Aorta (tissue), 5 donors: ENCODE measurements at regions of chr2 and their contacts with region 1.

Region 1: DNA sequence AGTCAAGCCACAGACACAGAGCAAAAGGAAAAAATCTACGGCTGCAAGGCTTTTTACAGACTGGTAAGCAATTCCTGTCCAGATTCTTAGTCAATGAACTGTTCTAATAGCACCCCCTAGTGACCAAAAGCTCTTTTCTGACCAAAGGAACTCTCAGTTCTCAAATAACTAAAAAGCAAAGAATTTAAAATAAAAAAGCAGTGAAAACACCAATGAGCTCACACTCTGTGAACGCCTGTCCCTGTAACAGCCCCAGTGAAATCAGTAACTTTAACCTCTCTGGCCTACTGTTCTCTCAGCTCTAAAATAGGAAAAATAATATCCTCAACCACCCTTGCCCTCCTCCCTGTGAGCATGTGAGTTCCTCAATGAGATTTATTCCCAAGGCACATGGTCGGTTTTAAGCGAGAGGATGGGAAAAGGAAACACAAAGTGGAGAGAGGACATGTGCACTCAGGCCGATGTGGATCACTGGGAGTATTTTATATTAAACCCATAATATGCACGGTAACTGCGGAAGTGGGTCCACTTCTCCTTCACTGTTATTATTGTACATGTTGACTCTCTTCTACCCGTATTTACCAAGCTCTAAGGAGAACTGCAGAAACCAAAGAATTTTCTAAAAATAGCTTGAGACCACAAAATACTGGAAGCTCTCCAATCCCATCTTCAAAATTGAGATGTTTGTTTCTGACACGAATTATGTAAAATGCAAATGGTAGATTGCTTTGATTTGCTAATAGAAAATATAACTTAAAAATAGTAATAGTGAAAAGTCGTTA is 128.5 kb downstream of the STK39 start:
- DNase-seq: no peak
- ATAC-seq: peak; percentile 82
- H3K4me3 ChIP-seq: no peak overlapping the region
- H3K27ac ChIP-seq: no peak overlapping the region
- H3K4me1 ChIP-seq: peaks cover 0 to 2% of the 10 kb centered on the region in 2 donors
- H3K27me3 ChIP-seq: no peaks in the 10 kb centered on the region

Region 2: GRCh38 chr2:166539340-166540162 is 1579.4 kb before region 1 on chr2:
- intact Hi-C with region 1: loop called in 1 of 2 experiments (anchors 5 kb)
- DNase-seq: no peak
- ATAC-seq: peak; percentile 82
- H3K4me3 ChIP-seq: no peak overlapping the region
- H3K27ac ChIP-seq: no peak overlapping the region
- H3K4me1 ChIP-seq: no peaks in the 10 kb centered on the region
- H3K27me3 ChIP-seq: no peaks in the 10 kb centered on the region

Region 3: DNA sequence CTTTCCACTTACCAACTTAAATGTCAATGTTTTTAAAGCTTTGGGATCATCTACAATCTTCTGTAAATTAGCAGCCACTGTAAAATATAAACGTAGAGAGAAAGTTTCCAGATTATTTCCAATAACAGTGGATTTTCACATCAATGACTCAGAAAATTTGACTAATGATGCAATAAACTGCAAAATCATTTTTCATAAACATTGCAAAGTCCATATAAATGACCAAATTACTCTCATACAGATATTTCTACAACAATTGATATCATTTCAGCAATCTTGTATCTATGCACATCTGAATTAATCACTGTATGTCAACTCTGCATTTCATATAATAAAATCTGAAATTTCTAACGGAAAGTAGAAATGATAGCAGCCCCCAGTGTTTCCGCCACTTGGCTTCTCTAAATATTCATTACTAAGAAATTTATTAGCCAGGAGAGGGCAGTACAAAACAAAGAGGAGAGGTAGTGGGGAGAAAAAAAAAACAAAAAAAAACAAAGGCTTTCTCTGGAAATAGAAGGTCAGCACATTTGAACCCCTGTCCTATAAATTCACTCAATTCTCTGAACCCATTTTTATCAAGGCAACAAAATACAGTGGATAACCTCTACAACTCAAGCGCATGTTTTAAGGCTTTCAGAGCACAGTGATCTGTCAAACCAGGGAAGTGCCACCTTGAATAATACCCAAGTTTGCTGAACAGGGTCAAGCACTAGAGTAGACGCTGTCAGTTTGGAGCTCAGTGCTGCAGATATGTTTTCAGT is 154.1 kb before region 1 on chr2:
- intact Hi-C with region 1: loop called in 1 of 2 experiments (anchors 2 kb)
- DNase-seq: no peak
- ATAC-seq: no peak
- H3K4me3 ChIP-seq: no peak overlapping the region
- H3K27ac ChIP-seq: no peak overlapping the region
- H3K4me1 ChIP-seq: no peaks in the 10 kb centered on the region
- H3K27me3 ChIP-seq: no peaks in the 10 kb centered on the region

Region 4: DNA sequence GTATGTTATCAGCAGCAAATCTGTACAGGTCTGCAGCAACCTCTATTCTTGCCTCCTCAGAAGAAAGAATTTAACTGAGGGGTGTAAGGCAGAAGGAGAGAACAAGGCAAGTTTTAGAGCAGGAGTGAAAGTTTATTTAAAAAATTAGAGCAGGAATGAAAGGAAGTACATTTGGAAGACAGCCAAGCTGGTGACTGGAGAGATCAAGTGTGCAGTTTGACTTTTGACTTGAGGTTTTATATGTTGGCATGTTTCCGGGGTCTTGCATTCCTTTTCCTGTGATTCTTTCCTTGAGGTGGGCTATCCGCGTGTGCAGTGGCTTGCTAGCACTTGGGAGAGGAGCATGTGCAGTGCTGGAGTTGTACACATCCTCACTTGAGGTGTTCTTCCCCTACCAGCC is 320.6 kb after region 1 on chr2:
- intact Hi-C with region 1: no loop called
- DNase-seq: no peak
- ATAC-seq: no peak
- H3K4me3 ChIP-seq: no peak overlapping the region
- H3K27ac ChIP-seq: no peak overlapping the region
- H3K4me1 ChIP-seq: peaks cover 0 to 3% of the 10 kb centered on the region in 2 donors
- H3K27me3 ChIP-seq: no peaks in the 10 kb centered on the region

Region 5: DNA sequence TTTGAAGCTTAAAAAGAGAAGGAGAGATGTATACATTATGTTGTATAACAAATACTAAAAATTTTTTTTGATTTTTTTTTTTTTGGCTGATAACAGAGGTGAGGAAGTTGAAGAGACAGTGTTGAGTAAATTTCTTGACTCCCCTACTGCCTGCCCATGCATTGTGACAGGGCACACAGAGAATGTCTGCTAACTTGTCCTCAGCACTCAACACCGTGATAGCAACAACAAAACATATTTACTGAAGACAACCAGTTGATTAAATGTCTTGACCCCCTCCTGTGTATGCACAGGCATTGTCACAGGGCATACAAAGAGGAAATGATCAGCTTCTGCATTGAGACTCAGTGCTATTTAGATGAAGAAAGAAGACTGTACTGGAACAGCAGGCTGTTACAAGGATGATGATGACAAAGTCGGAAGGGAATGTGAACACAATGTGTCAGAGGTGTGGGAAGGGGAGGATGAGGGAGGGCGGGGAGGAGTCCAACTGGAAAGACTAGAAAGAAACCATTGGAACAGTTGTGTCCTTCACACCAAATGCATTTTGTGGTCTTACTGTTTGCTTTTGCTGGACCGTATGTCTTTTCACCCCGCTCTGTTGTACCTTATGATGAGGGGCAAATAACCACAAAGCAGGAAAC is 426.6 kb after region 1 on chr2:
- intact Hi-C with region 1: no loop called
- DNase-seq: no peak
- ATAC-seq: no peak
- H3K4me3 ChIP-seq: no peak overlapping the region
- H3K27ac ChIP-seq: no peak overlapping the region
- H3K4me1 ChIP-seq: no peaks in the 10 kb centered on the region
- H3K27me3 ChIP-seq: no peaks in the 10 kb centered on the region